Aorta (tissue), 5 donors: ENCODE measurements at regions of chr18 and their contacts with region 1.

Region 1: DNA sequence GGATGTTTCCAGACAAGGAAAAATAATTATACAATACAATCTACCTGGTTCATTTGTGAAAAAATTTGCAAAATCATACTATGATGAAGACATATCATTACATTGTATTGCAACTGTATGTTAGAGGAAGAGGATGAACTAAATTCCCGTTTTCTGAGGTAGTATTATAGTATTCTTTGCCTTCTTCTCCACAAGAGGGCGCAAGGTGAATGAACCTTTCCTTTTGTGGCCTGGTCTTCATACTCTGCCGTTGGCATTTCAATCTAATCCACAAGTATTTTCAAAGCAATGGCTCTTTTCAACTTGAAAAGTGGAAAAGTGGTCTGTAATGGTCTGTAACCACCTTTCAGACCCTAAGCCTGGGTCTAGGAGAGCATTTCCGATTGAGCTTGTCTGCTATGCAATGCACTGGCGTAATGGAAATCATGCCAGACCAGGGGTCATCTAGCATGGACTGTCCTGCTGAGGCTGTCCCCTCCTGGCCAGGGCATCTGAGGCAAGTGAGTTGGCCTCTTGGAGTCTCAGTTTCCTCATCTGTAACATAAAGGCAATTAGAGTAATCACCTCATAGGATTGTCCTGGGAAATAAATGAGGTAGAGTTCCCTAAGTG is 30.8 kb upstream of the ZNF396 start:
- DNase-seq: no peak
- ATAC-seq: peak; percentile 83
- H3K4me3 ChIP-seq: no peak overlapping the region
- H3K27ac ChIP-seq: no peak overlapping the region
- H3K4me1 ChIP-seq: no peaks in the 10 kb centered on the region
- H3K27me3 ChIP-seq: no peaks in the 10 kb centered on the region

Region 2: DNA sequence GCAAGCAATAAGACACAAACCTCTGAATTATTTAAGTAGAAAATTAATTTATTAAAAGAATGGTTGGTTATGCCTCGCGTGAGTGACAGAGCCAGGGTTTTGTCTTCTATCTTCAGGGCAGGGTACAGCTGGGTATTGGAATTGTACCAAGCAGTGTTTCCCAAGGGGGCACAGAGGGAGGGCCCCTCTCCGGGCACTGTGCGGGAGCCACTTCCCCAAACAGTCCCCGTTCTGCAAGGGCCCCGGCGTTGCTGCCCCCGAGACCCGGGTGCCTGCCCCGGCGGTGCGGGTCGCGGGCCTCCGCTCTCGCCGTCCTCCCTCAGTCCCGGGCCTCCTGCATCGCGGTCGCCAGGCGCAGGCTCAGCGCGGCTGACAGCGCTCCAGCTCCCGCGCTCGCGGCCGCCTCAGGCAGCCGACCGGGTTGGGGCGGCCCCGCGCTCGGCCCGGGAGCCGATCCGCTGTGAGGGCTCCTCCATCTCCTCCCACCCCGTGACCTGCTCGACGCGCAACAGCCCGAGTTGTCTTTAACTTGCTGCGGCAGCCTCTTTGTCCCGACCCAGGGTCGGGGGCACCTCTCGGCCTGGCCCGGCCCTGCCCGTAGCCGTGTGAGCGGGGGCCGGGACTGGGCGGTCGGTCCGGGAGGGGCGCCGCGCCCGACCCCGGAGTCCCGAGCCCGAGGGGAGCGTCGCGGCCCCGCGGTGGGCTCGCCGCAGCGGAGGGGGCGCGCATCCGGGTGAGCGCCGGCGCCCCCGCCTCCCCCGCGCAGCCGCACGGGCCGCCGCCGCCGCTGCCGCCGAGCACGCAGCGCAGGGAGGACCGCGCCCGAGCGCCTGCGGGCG is 172.9 kb after region 1 on chr18:
- intact Hi-C with region 1: loop called in 1 of 2 experiments (anchors 5 kb)
- DNase-seq: peak; percentile 77 to 87
- ATAC-seq: peak; percentile 85
- H3K4me3 ChIP-seq: peak overlapping the region; percentile 68 to 99
- H3K27ac ChIP-seq: peak overlapping the region; percentile 87 to 99
- H3K4me1 ChIP-seq: no peaks in the 10 kb centered on the region
- H3K27me3 ChIP-seq: no peaks in the 10 kb centered on the region

Region 3: GRCh38 chr18:35695803-35696202 is 287.8 kb after region 1 on chr18:
- intact Hi-C with region 1: loop called in 1 of 2 experiments (anchors 10 kb)
- DNase-seq: no peak
- ATAC-seq: no peak
- H3K4me3 ChIP-seq: no peak overlapping the region
- H3K27ac ChIP-seq: no peak overlapping the region
- H3K4me1 ChIP-seq: peaks cover 2 to 4% of the 10 kb centered on the region in 2 donors
- H3K27me3 ChIP-seq: no peaks in the 10 kb centered on the region